Dorsolateral prefrontal cortex (tissue), 120 donors: ENCODE measurements at regions of chr12 and their contacts with region 1.

Region 1: GRCh38 chr12:117190210-117190781 is at the start of gene FBXO21:
- DNase-seq: peak; percentile 88 to 96 (median 94)
- H3K4me3 ChIP-seq: peak within 1 kb of the TSS; percentile 64 to 97 (median 88)
- H3K27ac ChIP-seq: peak within 1 kb of the TSS; percentile 65 to 95 (median 89)
- H3K27me3 ChIP-seq: no peaks in the 10 kb centered on the region
- CTCF ChIP-seq: peak in 34 of 56 donors; percentile 7 to 61 (median 30)
- total RNA-seq, gene FBXO21: 55.8 to 117 (median 87.1) TPM

Region 2: GRCh38 chr12:116737774-116738700 is 452.3 kb before region 1 on chr12 and contains the starts of genes RNFT2 and SPRING1:
- intact Hi-C with region 1: loop called in 1 of 2 experiments (anchors 10 kb)
- DNase-seq: peak; percentile 99 to 100 (median 100)
- H3K4me3 ChIP-seq: peak within 1 kb of the TSS; percentile 54 to 99 (median 88)
- H3K27ac ChIP-seq: peak within 1 kb of the TSS in 43 of 59 donors; percentile 16 to 87 (median 71)
- H3K27me3 ChIP-seq: no peaks in the 10 kb centered on the region
- CTCF ChIP-seq: peak in 29 of 56 donors; percentile 5 to 63 (median 23)
- total RNA-seq, gene RNFT2: 30.4 to 86.7 (median 60.1) TPM
- total RNA-seq, gene SPRING1: 30.7 to 74.8 (median 44.1) TPM

Region 3: DNA sequence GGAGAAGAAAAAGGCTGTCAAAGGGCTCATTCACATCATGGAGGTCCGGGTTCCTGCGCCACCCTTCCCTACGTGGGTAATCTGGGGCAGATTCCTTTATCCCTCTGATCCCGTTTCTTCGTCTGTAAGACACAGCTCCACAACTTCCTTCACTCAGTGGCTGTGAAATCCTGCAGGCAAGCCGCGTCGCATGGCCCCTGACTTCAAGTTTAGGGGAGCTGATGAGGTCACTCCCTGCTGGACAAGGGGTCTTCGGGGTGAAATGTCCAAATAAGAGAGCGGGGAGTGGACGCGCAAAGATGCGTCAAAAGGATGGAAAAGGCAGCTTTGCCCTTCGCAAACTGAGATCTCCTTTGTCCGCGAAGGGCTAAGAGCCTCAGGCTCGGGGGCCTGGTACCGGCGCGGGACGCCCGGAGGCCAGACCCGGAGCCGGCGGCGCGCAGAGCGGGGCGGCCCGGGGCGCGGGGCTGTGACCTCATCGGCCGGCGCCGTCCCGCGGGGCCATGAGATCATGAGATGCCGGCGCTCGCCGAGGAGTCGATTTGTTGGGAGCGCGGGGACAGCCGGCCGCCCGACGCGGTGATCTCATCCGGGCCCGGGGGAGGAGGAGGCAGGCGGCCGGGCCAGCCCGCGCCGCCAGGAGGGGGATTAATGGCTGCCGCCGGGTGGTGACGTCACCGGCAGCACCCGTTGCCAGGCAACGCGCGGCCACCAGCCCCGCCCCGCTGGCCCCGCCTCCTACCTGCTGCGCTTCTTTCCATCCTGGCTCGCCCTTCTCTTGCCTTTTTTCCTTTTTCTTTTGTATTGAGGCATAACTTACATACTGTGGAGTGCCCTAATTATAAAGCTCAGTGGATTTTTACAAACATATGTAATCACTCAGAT is 371.1 kb before region 1 on chr12:
- intact Hi-C with region 1: loop called in 1 of 2 experiments (anchors 10 kb)
- DNase-seq: peak; percentile 84 to 95 (median 92)
- H3K4me3 ChIP-seq: peak overlapping the region; percentile 58 to 97 (median 84)
- H3K27ac ChIP-seq: peak overlapping the region; percentile 66 to 98 (median 95)
- H3K27me3 ChIP-seq: no peaks in the 10 kb centered on the region
- CTCF ChIP-seq: peak in 32 of 56 donors; percentile 8 to 61 (median 29)

Region 4: DNA sequence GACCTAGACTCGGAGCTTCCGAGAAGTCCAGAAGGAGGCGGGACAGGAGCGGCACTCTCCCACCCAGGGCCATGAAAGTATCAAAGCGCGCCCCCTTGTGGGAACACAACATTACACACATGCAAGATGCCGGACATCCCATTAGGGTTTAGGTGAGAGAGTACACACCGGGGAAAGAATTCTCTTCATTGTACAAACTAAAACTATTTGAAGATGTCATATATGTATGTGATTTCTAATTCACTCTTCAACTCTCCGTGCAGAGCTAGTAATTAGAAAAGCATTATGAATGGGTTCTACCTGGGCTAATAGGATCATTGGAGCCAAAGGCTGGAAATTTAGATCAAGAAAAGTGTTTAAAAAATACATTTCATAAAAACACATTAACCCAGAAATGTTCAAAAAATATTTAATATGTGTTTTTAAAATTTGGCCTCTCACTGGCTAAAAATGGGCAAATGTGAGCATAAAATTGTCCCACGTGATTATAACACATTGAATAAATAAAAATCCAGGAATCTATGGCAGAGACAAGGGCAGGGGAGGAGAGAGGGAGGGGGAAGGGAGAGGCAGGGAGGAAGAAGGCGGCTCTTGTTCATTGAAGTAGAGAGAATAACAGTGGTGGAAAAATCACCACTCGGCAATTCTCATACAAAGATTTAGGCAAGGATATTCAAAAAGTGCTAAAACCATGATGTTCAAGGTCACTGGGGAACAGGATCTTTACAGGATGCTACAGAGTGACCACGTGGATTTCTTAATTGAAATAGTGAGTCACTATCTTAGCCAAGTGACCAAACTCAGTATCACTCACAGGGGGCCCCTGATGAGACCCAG is 38.9 kb before region 1 on chr12:
- intact Hi-C with region 1: loop called in 1 of 2 experiments (anchors 2 kb)
- DNase-seq: peak; percentile 52 to 70 (median 64)
- H3K4me3 ChIP-seq: no peak overlapping the region
- H3K27ac ChIP-seq: peak overlapping the region in 3 of 59 donors; percentile 2 to 32 (median 24)
- H3K27me3 ChIP-seq: no peaks in the 10 kb centered on the region
- CTCF ChIP-seq: peak; percentile 43 to 78 (median 69)

Region 5: GRCh38 chr12:117377744-117378143 is 187.4 kb after region 1 on chr12:
- intact Hi-C with region 1: no loop called
- DNase-seq: no peak
- H3K4me3 ChIP-seq: no peak overlapping the region
- H3K27ac ChIP-seq: no peak overlapping the region
- H3K27me3 ChIP-seq: peaks cover 0 to 4% (median 0%) of the 10 kb centered on the region in 45 donors
- CTCF ChIP-seq: no peak